ENCODE measurements at regions of chr5 and their contacts with region 1.

Region 1: GRCh38 chr5:52956915-52957747 is 32.0 kb upstream of the ITGA2 start:
- DNase-seq: no peak
- H3K4me3 ChIP-seq: no peak overlapping the region
- CTCF ChIP-seq: no peak

Region 2: DNA sequence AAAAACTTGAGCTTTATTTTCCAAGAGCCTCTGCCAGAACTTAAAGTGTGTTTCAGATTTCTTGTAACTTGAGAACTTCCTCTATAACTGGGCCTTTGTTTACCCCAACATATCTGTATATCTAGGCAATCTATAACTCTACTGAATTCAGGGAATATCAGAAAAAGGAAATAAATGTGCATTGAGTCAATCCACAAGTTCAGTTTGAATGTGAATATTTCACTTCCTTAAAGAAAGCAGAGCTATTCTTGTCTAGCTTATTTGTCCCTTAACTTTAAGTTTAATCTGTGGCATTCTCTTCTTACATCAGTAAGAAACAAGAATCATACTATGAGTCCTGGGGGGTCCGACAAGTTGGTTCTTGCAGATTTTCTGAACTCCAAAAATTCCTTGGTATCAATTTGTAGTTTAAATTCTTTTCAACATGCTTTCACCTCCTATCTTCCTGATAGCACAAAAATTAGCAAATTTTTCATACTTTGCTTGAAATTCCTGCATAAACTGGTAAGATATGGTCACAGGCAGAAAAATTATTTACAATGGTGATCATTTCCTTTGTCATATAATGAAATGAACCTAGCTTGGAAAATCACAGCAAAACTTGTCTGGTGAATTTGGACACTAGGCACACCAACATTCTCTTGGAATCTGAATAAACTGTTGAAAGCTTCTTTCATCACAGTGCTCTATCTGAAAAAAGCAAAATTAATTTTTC is 189.2 kb before region 1 on chr5:
- in situ Hi-C with region 1: no loop called
- DNase-seq: no peak
- H3K4me3 ChIP-seq: no peak overlapping the region
- CTCF ChIP-seq: no peak

Region 3: GRCh38 chr5:53109443-53110127 is 152.5 kb after region 1 on chr5 and contains the start of gene MOCS2:
- in situ Hi-C with region 1: loop called (anchors 10 kb)
- DNase-seq: peak; percentile 88
- H3K4me3 ChIP-seq: peak within 1 kb of the TSS; percentile 81
- CTCF ChIP-seq: no peak

Measured in astrocyte of the spinal cord (primary cell).